ENCODE measurements at regions of chr1 and their contacts with region 1.

Region 1: DNA sequence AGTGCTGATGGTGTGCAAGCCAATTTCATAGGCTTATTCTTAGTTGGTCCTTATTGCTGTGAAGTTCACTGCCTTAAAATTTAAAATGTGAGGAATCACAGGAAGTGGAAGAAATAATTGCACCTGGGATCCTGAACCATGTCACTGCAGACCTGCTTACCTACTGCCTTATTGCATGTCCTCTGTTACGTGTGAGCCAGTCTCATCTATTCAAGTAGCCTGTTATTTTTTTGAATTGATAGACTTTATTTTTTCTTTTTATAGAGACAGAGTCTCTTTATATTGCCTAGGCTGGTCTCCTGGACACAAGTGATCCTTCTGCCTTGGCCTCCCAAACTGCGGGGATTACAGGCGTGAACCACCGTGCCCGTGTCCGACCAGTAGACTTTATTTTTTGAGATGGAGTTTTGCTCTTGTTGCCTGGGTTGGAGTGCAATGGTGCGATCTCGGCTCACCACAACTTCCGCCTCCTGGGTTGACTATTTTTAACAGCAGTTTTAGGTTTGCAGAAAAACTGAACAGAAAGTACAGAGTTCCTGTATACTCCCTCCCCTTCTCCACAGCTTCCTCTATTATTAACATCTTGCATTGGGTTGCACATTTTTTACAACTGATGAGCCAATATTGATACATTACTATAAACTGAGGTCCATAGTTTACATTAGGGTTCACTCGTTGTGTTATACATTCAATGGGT is 14.0 kb upstream of the DISC1 start:
- DNase-seq: peak; percentile 74
- ATAC-seq: peak; percentile 87
- H3K4me3 Mint-ChIP-seq: peak overlapping the region; percentile 65
- H3K27ac Mint-ChIP-seq: peak overlapping the region; percentile 81
- H3K4me1 Mint-ChIP-seq: peaks cover 49% of the 10 kb centered on the region
- H3K27me3 Mint-ChIP-seq: no peaks in the 10 kb centered on the region

Region 2: DNA sequence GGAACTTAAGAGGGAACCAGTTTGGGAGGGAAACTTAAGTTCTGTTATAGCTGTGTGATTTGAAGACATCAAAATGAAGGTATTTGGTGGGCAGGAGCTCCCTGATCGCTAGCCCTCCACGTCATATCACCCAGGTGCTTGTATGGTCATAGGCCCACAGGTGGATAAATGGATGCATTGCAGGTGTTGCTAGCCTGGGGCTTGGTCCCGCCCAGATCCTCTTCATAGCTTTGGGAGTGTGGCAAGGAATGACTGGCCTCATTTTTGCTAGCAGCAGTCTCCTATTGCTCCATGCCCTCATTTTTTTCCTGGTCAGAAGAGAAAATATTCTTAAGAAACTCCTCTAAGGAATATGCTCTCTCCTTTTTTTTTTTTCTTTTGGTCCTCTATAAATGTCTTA is 360.2 kb before region 1 on chr1:
- CTCF ChIA-PET with region 1: no interaction called
- POLR2A ChIA-PET with region 1: interaction called, 11 read pairs
- intact Hi-C with region 1: no loop called
- DNase-seq: no peak
- ATAC-seq: no peak
- H3K4me3 Mint-ChIP-seq: no peak overlapping the region
- H3K27ac Mint-ChIP-seq: no peak overlapping the region
- H3K4me1 Mint-ChIP-seq: peaks cover 3% of the 10 kb centered on the region
- H3K27me3 Mint-ChIP-seq: no peaks in the 10 kb centered on the region

Region 3: GRCh38 chr1:231626535-231626945 is 14.0 kb after region 1 on chr1 and contains the start of gene DISC1:
- CTCF ChIA-PET with region 1: interaction called, 7 read pairs
- POLR2A ChIA-PET with region 1: no interaction called
- intact Hi-C with region 1: loop called in 1 of 2 experiments (anchors 1 kb)
- DNase-seq: peak; percentile 80
- ATAC-seq: peak; percentile 60
- H3K4me3 Mint-ChIP-seq: peak within 1 kb of the TSS; percentile 80
- H3K27ac Mint-ChIP-seq: peak within 1 kb of the TSS; percentile 71
- H3K4me1 Mint-ChIP-seq: peaks cover 32% of the 10 kb centered on the region
- H3K27me3 Mint-ChIP-seq: peaks cover 3% of the 10 kb centered on the region
- total RNA-seq, gene DISC1: 1.9 to 3.8 TPM

Measured in activated CD4-positive, alpha-beta T cell treated with anti-CD3 and anti-CD28 coated beads for 36 hours (primary cell).